ENCODE measurements at regions of chr2 and their contacts with region 1.

Region 1: GRCh38 chr2:219160186-219161017 is at the start of gene NHEJ1:
- DNase-seq: peak; percentile 96
- ATAC-seq: peak; percentile 87
- H3K4me3 Mint-ChIP-seq: peak within 1 kb of the TSS; percentile 96
- H3K27ac Mint-ChIP-seq: peak within 1 kb of the TSS; percentile 98
- H3K4me1 Mint-ChIP-seq: peaks cover 16% of the 10 kb centered on the region
- H3K27me3 Mint-ChIP-seq: no peaks in the 10 kb centered on the region
- CTCF ChIP-seq: peak; percentile 42
- total RNA-seq, gene NHEJ1: 19.1 and 25.0 TPM in 2 replicates

Region 2: DNA sequence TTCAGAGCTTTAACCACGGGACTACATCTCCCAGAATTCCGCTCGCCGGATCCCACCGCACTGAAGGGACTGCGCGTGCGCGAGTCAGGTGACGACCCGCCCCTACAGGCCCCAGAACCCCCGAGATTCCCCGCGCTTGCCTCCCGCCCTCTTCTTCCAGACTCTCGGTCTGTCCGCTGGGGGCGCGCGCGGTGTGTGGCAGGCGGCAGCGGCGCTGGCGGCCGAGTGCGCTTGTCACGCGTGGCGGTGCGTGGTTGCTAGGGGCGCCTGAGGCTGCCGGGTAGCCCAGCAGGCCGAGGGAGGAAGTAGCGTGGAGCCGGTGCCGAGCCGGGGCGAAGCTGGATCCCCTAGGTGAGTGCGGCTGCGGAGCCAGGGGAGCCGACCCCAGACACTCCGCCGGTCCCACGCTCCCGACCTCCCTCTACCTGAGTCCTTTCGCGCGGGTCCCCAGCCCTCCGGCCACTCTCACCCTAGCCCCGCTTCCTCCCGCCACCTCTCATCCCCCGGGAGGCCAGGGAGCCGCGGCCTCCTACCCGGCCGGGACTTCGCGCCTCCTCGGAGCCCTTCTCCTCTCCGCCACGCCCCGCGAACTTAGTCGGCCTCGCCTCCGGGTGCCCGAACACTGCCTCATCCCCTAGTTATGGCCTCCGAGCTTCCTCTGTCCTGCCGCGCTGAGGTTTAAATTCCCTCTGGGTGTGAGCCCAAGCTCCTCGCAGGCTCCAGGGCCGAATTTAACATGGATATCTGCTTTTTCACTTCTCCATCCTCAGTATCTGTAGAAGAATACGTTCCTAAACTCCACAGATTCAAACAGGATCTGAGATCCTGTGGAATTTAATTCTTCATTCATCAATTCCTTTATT is 449.5 kb before region 1 on chr2 and contains the start of gene TTLL4:
- CTCF ChIA-PET with region 1: no interaction called
- POLR2A ChIA-PET with region 1: no interaction called
- intact Hi-C with region 1: loop called (anchors 1 kb)
- DNase-seq: peak; percentile 98
- ATAC-seq: peak; percentile 97
- H3K4me3 Mint-ChIP-seq: peak within 1 kb of the TSS; percentile 91
- H3K27ac Mint-ChIP-seq: peak within 1 kb of the TSS; percentile 86
- H3K4me1 Mint-ChIP-seq: peaks cover 26% of the 10 kb centered on the region
- H3K27me3 Mint-ChIP-seq: no peaks in the 10 kb centered on the region
- CTCF ChIP-seq: no peak
- total RNA-seq, gene TTLL4: 36.0 and 37.2 TPM in 2 replicates

Region 3: GRCh38 chr2:219057709-219058540 is 102.5 kb before region 1 on chr2:
- CTCF ChIA-PET with region 1: interaction called, 53 read pairs
- POLR2A ChIA-PET with region 1: interaction called, 3 read pairs
- intact Hi-C with region 1: loop called (anchors 1 kb)
- DNase-seq: peak; percentile 72
- ATAC-seq: peak; percentile 99
- H3K4me3 Mint-ChIP-seq: peak overlapping the region; percentile 57
- H3K27ac Mint-ChIP-seq: no peak overlapping the region
- H3K4me1 Mint-ChIP-seq: peaks cover 32% of the 10 kb centered on the region
- H3K27me3 Mint-ChIP-seq: peaks cover 58% of the 10 kb centered on the region
- CTCF ChIP-seq: peak; percentile 47

Region 4: DNA sequence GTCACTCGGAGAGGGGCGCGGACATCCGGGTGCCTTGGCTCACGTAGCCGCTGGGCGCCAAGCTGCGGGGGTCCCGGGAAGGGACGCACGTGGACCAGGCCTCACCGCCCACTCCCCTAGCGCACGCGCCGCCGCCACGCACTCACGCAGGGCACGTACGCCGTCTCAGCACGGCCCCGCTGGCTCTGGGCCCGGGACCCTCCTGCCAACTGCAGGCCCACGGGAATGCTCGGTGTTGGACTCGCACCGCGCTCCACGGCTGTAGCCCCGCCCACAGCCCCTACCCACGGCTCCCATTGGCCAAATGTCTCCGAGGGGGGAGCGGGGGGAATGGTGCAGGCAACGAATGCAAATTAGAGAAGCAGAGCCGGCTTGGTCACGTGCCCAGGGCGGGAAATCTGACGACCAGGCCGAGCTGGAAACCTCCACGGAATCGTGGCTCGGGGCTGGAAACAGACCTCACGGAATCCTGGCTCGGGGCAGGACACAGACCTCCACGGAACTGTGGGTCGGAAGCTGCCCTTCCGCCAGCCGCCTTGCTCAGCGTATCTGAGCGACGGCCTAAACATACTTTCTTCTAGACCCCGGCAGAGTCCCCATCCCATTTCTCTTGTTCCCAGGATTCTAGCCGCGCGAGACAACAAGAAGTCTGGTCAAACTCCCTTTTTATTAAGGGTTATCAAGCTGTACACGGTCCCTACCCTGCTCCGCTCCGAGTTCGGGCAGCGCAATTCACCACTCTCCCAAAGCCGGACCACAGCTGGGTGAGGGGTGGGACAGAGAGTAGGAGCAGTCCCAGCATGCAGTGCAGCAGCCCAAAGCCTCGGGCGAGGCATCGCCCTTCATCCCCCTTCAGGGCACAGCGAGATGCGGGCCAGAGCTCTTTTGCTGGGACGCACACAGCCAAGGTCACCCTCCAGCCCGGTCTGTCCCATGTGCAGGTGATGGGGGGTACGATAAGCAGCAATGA is 58.6 kb after region 1 on chr2 and contains the start of gene ABCB6:
- CTCF ChIA-PET with region 1: no interaction called
- POLR2A ChIA-PET with region 1: interaction called, 4 read pairs
- intact Hi-C with region 1: loop called (anchors 2 kb)
- DNase-seq: peak; percentile 82
- ATAC-seq: peak; percentile 95
- H3K4me3 Mint-ChIP-seq: peak within 1 kb of the TSS; percentile 81
- H3K27ac Mint-ChIP-seq: peak within 1 kb of the TSS; percentile 74
- H3K4me1 Mint-ChIP-seq: peaks cover 19% of the 10 kb centered on the region
- H3K27me3 Mint-ChIP-seq: no peaks in the 10 kb centered on the region
- CTCF ChIP-seq: no peak
- total RNA-seq, gene ABCB6: 12.1 and 16.6 TPM in 2 replicates

Region 5: DNA sequence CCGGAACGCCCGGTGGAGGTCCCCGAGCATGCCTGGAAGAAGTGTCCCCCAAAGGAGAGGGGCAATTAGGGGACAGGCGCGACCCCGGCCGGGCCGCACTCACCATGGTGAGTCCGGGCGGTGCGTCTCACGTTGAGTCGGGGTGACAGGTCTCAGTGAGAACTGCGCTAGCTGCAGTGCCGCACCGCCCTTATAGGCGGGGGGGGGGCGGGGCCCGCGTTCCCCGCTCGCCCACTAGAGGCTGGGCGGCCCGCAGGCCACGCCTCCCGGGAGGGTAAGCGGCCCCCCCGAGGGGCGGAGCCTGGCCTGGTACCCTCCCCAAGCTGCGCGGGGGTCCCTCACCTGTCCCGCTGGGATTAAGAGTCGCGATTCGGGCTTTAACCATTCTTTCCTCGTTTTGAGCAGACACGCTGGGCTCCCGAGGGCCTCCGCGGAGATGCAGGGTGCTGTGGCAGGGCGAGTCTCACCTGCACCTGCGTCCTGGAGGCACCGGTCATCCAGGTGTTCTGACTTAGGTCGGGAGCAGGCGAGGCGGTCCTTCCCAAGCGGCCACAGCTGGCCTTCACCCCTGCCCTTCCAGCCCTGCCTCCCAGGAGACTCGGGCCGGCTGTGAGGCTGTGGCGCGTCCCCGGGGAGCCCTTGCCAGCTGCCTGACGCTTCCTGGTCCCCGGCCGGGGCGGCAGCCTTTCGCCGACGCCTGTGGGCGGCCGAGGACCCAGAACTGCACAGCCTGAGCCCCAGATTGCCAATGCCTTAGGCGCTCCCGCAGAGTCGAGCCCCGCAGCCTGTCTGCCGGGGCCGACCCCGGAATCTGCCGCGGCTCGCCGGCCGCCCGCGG is 93.6 kb after region 1 on chr2 and contains the start of gene TUBA4A:
- CTCF ChIA-PET with region 1: interaction called, 3 read pairs
- POLR2A ChIA-PET with region 1: interaction called, 4 read pairs
- intact Hi-C with region 1: loop called (anchors 1 kb)
- DNase-seq: peak; percentile 90
- ATAC-seq: peak; percentile 69
- H3K4me3 Mint-ChIP-seq: peak within 1 kb of the TSS; percentile 82
- H3K27ac Mint-ChIP-seq: peak within 1 kb of the TSS; percentile 98
- H3K4me1 Mint-ChIP-seq: peaks cover 53% of the 10 kb centered on the region
- H3K27me3 Mint-ChIP-seq: no peaks in the 10 kb centered on the region
- CTCF ChIP-seq: no peak
- total RNA-seq, gene TUBA4A: 184 and 192 TPM in 2 replicates

Region 6: GRCh38 chr2:219352448-219353023 is 192.1 kb after region 1 on chr2:
- CTCF ChIA-PET with region 1: no interaction called
- POLR2A ChIA-PET with region 1: no interaction called
- intact Hi-C with region 1: loop called (anchors 1 kb)
- DNase-seq: no peak
- ATAC-seq: peak; percentile 56
- H3K4me3 Mint-ChIP-seq: no peak overlapping the region
- H3K27ac Mint-ChIP-seq: no peak overlapping the region
- H3K4me1 Mint-ChIP-seq: no peaks in the 10 kb centered on the region
- H3K27me3 Mint-ChIP-seq: peaks cover 52% of the 10 kb centered on the region
- CTCF ChIP-seq: no peak

Measured in activated B cell treated with CpG ODN at 0.5 μM for 24 hours (primary cell).